ENCODE measurements at regions of chr1 and their contacts with region 1.

Region 1: DNA sequence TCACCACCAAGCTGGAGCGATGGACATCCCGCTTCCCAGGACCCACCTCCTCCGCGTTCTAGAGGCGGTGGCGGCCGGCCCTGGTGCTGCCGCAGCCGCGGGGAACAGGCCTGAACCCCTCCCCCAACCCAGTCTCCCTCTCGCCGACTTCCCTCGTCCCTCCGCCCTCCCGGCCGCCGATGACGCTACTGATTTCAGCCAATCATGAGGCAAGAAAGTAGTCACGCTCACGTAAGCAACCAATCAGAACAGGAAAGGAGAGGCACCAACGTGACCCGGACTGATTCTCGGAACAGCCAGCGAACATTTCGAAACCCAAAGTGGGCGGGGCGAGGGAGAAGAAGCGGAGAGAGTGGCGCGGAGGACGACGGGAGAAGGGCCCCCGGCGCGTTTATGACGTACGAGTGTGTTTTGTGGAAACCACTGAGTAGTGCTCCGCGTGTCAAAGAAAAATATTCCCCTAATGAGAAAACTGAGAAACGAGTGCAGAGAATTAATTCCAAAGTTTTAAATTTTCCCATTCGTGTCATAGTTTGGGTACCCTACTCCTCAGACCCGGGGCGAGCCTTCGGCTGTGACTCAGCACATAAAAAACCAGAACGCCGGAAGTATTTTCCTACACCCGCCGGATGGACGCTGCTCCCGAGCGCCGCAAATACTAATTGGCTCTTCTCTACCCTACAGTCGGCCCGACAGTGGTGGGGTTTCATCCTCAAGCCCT is at the start of gene NRDC:
- DNase-seq: peak; percentile 99 to 100 (median 99)
- ATAC-seq: peak; percentile 89
- H3K4me3 ChIP-seq: peak within 1 kb of the TSS; percentile 90 to 99
- H3K4me3 Mint-ChIP-seq: no peak within 1 kb of the TSS
- H3K27ac ChIP-seq: peak within 1 kb of the TSS; percentile 89 to 97
- H3K27ac Mint-ChIP-seq: no peak within 1 kb of the TSS
- H3K4me1 ChIP-seq: peaks cover 30% of the 10 kb centered on the region
- H3K4me1 Mint-ChIP-seq: peaks cover 26% of the 10 kb centered on the region
- H3K27me3 ChIP-seq: peaks cover 0 to 2% of the 10 kb centered on the region in 2 experiments
- H3K27me3 Mint-ChIP-seq: peaks cover 13% of the 10 kb centered on the region
- CTCF ChIP-seq: no peak
- total RNA-seq, gene NRDC: 47.6 to 54.3 TPM

Region 2: DNA sequence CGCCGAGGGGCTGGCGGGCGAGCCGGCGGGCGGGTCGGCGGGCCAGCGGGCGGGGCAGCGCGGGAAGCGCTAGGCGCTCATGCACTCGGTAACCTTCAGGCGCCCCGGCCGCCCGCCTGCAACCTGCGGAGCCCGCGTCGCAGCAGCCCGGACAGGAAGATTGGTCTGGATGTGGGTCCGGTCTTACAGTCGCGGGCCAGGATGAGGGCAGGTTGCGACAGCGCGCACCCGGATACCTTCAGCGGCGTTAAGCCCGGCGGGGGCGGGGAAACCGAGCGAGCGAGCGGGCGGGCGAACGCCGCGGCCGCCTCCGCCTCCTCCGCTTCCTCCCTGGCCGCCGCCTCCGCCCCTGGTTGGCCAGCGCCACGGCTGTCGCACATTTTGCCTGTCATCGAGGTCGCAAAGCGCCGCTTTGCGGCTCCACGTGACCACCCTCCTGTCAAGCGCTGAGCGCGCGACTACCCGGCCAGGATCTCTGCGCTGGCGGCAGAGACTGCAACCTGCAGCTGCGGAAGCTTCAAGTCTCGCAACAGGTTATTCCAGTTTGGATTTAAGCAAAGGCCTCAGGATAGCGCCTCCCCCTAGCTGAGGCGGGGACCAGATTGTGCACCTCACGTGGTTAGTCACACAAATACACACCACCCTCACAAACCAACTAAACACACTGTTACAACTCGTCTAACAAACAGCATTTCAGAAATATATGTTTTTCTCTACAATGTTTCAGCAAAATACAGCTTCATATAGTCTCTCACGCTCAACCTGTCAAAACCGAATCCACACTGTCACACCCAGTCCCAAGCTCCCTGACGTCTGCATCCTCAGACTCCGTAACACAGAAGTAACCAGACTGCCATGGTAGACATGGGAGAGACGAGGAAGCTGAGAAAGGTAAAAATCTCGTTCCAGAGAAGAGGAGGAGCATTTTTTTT is 918.6 kb before region 1 on chr1 and contains the start of gene FAF1:
- CTCF ChIA-PET with region 1: no interaction called
- POLR2A ChIA-PET with region 1: no interaction called
- intact Hi-C with region 1: loop called in 1 of 2 experiments (anchors 2 kb)
- DNase-seq: peak; percentile 96 to 99 (median 98)
- ATAC-seq: peak; percentile 82
- H3K4me3 ChIP-seq: peak within 1 kb of the TSS; percentile 69 to 82
- H3K4me3 Mint-ChIP-seq: peak within 1 kb of the TSS; percentile 94
- H3K27ac ChIP-seq: peak within 1 kb of the TSS; percentile 74 to 77
- H3K27ac Mint-ChIP-seq: peak within 1 kb of the TSS; percentile 92
- H3K4me1 ChIP-seq: peaks cover 12% of the 10 kb centered on the region
- H3K4me1 Mint-ChIP-seq: peaks cover 31% of the 10 kb centered on the region
- H3K27me3 ChIP-seq: no peaks in the 10 kb centered on the region
- H3K27me3 Mint-ChIP-seq: no peaks in the 10 kb centered on the region
- CTCF ChIP-seq: no peak
- total RNA-seq, gene FAF1: 39.0 to 44.0 TPM

Region 3: DNA sequence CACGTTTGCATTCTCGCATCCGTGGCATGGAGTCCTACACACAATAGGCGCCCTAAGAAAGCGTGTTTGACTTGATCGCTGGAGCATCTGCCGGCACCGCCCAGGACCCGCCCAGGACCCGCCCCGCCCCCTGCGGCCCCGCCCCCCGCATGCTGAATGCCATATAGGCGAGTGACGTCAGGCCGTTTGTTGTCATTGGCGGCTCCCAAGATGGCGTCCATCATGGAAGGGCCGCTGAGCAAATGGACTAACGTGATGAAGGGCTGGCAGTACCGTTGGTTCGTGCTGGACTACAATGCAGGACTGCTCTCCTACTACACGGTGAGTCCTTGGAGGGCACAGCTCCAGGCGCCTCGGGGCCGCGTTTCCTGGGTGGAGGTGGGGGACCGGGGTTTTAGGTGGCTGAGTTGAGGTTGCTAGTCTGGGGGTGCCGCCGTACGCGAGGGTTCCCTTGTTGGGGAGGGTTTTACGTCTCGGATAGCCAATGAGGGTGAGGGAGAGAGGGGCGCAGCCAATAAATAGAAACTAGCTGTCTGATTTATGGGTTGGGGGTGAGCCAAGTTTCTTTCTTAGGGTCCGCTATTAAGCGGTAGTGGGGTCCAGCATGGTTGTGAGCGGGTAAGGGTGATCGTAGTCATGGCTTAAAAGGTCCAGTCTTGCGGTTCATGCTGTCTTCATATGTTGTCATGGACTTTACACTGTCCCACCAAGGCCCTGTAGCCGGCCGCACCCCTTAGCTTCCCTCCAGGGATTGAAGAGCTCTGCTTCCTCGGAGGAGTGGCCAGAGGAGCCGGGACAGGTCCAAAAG is 261.7 kb before region 1 on chr1 and contains the start of gene OSBPL9:
- CTCF ChIA-PET with region 1: no interaction called
- POLR2A ChIA-PET with region 1: interaction called, 3 read pairs
- intact Hi-C with region 1: loop called (anchors 2 kb)
- DNase-seq: peak; percentile 78 to 94 (median 87)
- ATAC-seq: peak; percentile 93
- H3K4me3 ChIP-seq: peak within 1 kb of the TSS; percentile 90 to 98
- H3K4me3 Mint-ChIP-seq: peak within 1 kb of the TSS; percentile 100
- H3K27ac ChIP-seq: peak within 1 kb of the TSS; percentile 84
- H3K27ac Mint-ChIP-seq: peak within 1 kb of the TSS; percentile 99
- H3K4me1 ChIP-seq: peaks cover 23% of the 10 kb centered on the region
- H3K4me1 Mint-ChIP-seq: peaks cover 42% of the 10 kb centered on the region
- H3K27me3 ChIP-seq: no peaks in the 10 kb centered on the region
- H3K27me3 Mint-ChIP-seq: peaks cover under 1% of the 10 kb centered on the region
- CTCF ChIP-seq: no peak
- total RNA-seq, gene OSBPL9: 48.5 to 49.2 TPM

Region 4: GRCh38 chr1:51819810-51820209 is 59.0 kb before region 1 on chr1:
- CTCF ChIA-PET with region 1: no interaction called
- POLR2A ChIA-PET with region 1: no interaction called
- intact Hi-C with region 1: loop called in 1 of 2 experiments (anchors 5 kb)
- DNase-seq: no peak
- ATAC-seq: no peak
- H3K4me3 ChIP-seq: no peak overlapping the region
- H3K4me3 Mint-ChIP-seq: no peak overlapping the region
- H3K27ac ChIP-seq: no peak overlapping the region
- H3K27ac Mint-ChIP-seq: no peak overlapping the region
- H3K4me1 ChIP-seq: no peaks in the 10 kb centered on the region
- H3K4me1 Mint-ChIP-seq: no peaks in the 10 kb centered on the region
- H3K27me3 ChIP-seq: no peaks in the 10 kb centered on the region
- H3K27me3 Mint-ChIP-seq: no peaks in the 10 kb centered on the region
- CTCF ChIP-seq: no peak

Region 5: DNA sequence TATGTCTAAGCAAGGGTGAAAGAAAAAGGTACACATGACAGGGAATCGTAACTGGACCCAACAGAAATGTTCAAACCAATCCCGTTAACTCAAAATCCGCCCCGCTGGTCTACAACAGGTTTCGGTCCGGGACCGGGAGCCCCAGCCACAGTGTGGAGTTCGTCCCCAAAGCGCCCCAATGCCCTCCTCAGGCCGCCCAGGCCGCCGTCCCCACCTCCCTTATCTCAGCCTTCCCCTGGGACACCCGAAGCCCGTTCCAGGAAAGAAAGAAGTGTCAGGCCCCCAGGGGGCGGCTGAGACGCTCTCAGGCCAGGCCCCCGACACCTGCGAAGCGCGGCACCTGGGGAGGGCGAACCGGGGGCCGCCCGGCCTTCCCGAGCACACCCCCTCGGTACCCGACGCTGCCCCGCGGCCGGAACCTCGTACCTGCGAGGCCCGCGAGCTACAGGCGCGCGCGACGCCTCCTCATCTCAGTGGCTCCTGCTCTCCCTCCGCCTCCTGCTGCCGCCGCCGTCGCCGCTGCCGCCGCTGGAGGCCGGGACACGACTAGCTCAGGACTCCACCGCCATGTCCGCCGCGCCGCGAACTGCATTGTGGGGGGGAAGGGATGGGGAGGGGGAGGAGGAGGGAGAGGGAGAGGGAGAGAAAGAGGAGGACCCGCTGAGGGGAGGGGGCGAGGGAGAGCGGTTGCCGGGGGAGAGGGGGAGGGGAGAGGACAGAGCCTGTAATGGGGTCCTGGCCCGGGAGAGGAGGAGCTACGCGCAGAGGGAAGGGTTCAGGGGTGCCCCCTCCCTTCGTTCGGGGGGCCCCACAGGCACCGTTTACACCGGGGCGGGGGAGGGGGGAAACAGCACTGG is 674.0 kb after region 1 on chr1 and contains the start of gene TUT4:
- CTCF ChIA-PET with region 1: no interaction called
- POLR2A ChIA-PET with region 1: no interaction called
- intact Hi-C with region 1: loop called in 1 of 2 experiments (anchors 5 kb)
- DNase-seq: peak; percentile 55 to 87 (median 73)
- ATAC-seq: peak; percentile 56
- H3K4me3 ChIP-seq: peak within 1 kb of the TSS; percentile 87 to 96
- H3K4me3 Mint-ChIP-seq: peak within 1 kb of the TSS; percentile 70
- H3K27ac ChIP-seq: peak within 1 kb of the TSS; percentile 92 to 96
- H3K27ac Mint-ChIP-seq: peak within 1 kb of the TSS; percentile 69
- H3K4me1 ChIP-seq: peaks cover 35% of the 10 kb centered on the region
- H3K4me1 Mint-ChIP-seq: peaks cover 40% of the 10 kb centered on the region
- H3K27me3 ChIP-seq: no peaks in the 10 kb centered on the region
- H3K27me3 Mint-ChIP-seq: no peaks in the 10 kb centered on the region
- CTCF ChIP-seq: peak; percentile 8
- total RNA-seq, gene TUT4: 133 to 134 TPM